CD4-positive, alpha-beta T cell (primary cell): ENCODE measurements at regions of chr5 and their contacts with region 1.

Region 1: GRCh38 chr5:134304311-134304710 is 62.7 kb downstream of the CDKL3 start:
- DNase-seq: no peak
- ATAC-seq: no peak
- H3K4me3 ChIP-seq: no peak overlapping the region
- H3K4me3 Mint-ChIP-seq: no peak overlapping the region
- H3K27ac ChIP-seq: no peak overlapping the region
- H3K27ac Mint-ChIP-seq: no peak overlapping the region
- H3K4me1 ChIP-seq: peaks cover 3% of the 10 kb centered on the region
- H3K4me1 Mint-ChIP-seq: no peaks in the 10 kb centered on the region
- H3K27me3 ChIP-seq: no peaks in the 10 kb centered on the region
- H3K27me3 Mint-ChIP-seq: no peaks in the 10 kb centered on the region
- CTCF ChIP-seq: no peak

Region 2: GRCh38 chr5:133336121-133336968 is 968.0 kb before region 1 on chr5:
- CTCF ChIA-PET with region 1: no interaction called
- POLR2A ChIA-PET with region 1: no interaction called
- intact Hi-C with region 1: no loop called
- DNase-seq: no peak
- ATAC-seq: no peak
- H3K4me3 ChIP-seq: no peak overlapping the region
- H3K4me3 Mint-ChIP-seq: no peak overlapping the region
- H3K27ac ChIP-seq: no peak overlapping the region
- H3K27ac Mint-ChIP-seq: no peak overlapping the region
- H3K4me1 ChIP-seq: peaks cover 4% of the 10 kb centered on the region
- H3K4me1 Mint-ChIP-seq: peaks cover 12% of the 10 kb centered on the region
- H3K27me3 ChIP-seq: no peaks in the 10 kb centered on the region
- H3K27me3 Mint-ChIP-seq: no peaks in the 10 kb centered on the region
- CTCF ChIP-seq: no peak

Region 3: DNA sequence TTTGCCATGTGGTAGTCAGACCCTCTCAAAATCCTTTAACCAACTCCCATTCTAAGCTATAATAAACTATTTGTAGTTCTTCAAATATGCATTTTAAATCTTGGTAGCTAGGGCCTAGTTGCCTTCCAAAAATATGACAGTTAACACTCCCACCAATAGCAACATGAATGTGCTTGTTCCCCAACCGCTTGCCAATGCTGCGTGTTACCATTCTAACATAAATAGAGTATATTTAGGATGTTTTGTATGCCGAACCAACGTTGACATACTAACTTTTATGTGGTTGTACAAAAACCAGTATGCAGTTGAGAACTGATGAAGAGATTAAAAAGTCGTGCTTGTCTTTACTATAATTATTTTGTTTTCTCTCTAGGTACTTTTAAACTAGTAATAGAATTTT is 76.0 kb after region 1 on chr5:
- CTCF ChIA-PET with region 1: interaction called, 4 read pairs
- POLR2A ChIA-PET with region 1: interaction called, 4 read pairs
- intact Hi-C with region 1: loop called in 1 of 2 experiments (anchors 1 kb)
- DNase-seq: peak in 2 of 14 experiments; percentile 26 to 39
- ATAC-seq: peak; percentile 67
- H3K4me3 ChIP-seq: no peak overlapping the region
- H3K4me3 Mint-ChIP-seq: peak overlapping the region; percentile 49
- H3K27ac ChIP-seq: no peak overlapping the region
- H3K27ac Mint-ChIP-seq: peak overlapping the region; percentile 70
- H3K4me1 ChIP-seq: peaks cover 9% of the 10 kb centered on the region
- H3K4me1 Mint-ChIP-seq: peaks cover 58% of the 10 kb centered on the region
- H3K27me3 ChIP-seq: no peaks in the 10 kb centered on the region
- H3K27me3 Mint-ChIP-seq: no peaks in the 10 kb centered on the region
- CTCF ChIP-seq: no peak

Region 4: GRCh38 chr5:134577796-134578363 is 273.6 kb after region 1 on chr5:
- CTCF ChIA-PET with region 1: interaction called, 6 read pairs
- POLR2A ChIA-PET with region 1: no interaction called
- intact Hi-C with region 1: loop called (anchors 1 to 2 kb)
- DNase-seq: peak; percentile 63 to 86 (median 72)
- ATAC-seq: peak; percentile 85
- H3K4me3 ChIP-seq: no peak overlapping the region
- H3K4me3 Mint-ChIP-seq: no peak overlapping the region
- H3K27ac ChIP-seq: no peak overlapping the region
- H3K27ac Mint-ChIP-seq: peak overlapping the region; percentile 82
- H3K4me1 ChIP-seq: peaks cover 9% of the 10 kb centered on the region
- H3K4me1 Mint-ChIP-seq: peaks cover 7% of the 10 kb centered on the region
- H3K27me3 ChIP-seq: no peaks in the 10 kb centered on the region
- H3K27me3 Mint-ChIP-seq: no peaks in the 10 kb centered on the region
- CTCF ChIP-seq: peak; percentile 91

Region 5: GRCh38 chr5:134586866-134587524 is 282.7 kb after region 1 on chr5:
- CTCF ChIA-PET with region 1: interaction called, 10 read pairs
- POLR2A ChIA-PET with region 1: interaction called, 7 read pairs
- intact Hi-C with region 1: loop called (anchors 1 kb)
- DNase-seq: peak; percentile 72 to 88 (median 79)
- ATAC-seq: peak; percentile 97
- H3K4me3 ChIP-seq: no peak overlapping the region
- H3K4me3 Mint-ChIP-seq: peak overlapping the region; percentile 3
- H3K27ac ChIP-seq: no peak overlapping the region
- H3K27ac Mint-ChIP-seq: peak overlapping the region; percentile 28
- H3K4me1 ChIP-seq: peaks cover 7% of the 10 kb centered on the region
- H3K4me1 Mint-ChIP-seq: peaks cover 16% of the 10 kb centered on the region
- H3K27me3 ChIP-seq: no peaks in the 10 kb centered on the region
- H3K27me3 Mint-ChIP-seq: no peaks in the 10 kb centered on the region
- CTCF ChIP-seq: peak; percentile 84